ENCODE measurements at regions of chr14 and their contacts with region 1.

Region 1: GRCh38 chr14:104094709-104095438 is 9.4 kb downstream of the ASPG start:
- DNase-seq: peak; percentile 61 to 67
- H3K4me3 ChIP-seq: no peak overlapping the region
- H3K27ac ChIP-seq: no peak overlapping the region
- H3K4me1 ChIP-seq: peaks cover 4 to 7% of the 10 kb centered on the region in 2 donors
- H3K27me3 ChIP-seq: no peaks in the 10 kb centered on the region
- CTCF ChIP-seq: peak; percentile 59 to 91 (median 80)
- POLR2A ChIP-seq: no peak

Region 2: DNA sequence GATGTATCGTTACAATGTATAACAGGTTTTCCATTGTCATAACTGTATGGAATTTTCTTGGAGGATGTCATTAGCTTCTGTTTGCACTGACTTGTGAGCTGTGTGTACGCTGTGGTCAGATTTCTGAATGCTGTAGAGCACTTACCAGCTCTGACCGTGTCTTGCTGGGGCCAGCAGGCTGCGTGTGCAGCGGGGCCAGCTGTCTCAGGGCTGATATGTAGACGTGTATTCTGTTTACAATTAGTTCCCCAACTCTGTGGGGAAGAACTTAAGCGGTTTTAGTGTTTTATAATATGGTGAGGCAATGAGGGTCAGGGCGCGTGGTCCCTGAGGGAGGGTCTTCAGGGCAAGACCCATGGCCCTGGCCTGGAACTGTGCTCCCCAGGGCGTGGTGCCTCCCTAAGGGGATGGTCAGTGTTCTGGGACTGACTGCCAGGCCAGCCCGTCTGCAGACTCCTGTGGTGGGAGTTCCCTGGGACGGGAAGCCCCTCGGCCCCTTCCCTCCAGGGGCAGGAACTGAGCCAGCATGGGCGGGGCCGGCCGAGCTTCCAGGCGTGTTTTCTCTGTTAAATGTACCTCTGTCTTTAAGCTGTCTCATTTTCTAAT is 398.3 kb before region 1 on chr14:
- intact Hi-C with region 1: no loop called
- DNase-seq: no peak
- H3K4me3 ChIP-seq: no peak overlapping the region
- H3K27ac ChIP-seq: peak overlapping the region in 1 of 3 donors; percentile 46
- H3K4me1 ChIP-seq: peaks cover 3 to 19% of the 10 kb centered on the region in 2 donors
- H3K27me3 ChIP-seq: no peaks in the 10 kb centered on the region
- CTCF ChIP-seq: no peak
- POLR2A ChIP-seq: no peak

Region 3: GRCh38 chr14:103949131-103949790 is 145.6 kb before region 1 on chr14:
- intact Hi-C with region 1: no loop called
- DNase-seq: no peak
- H3K4me3 ChIP-seq: no peak overlapping the region
- H3K27ac ChIP-seq: no peak overlapping the region
- H3K4me1 ChIP-seq: no peaks in the 10 kb centered on the region
- H3K27me3 ChIP-seq: no peaks in the 10 kb centered on the region
- CTCF ChIP-seq: no peak
- POLR2A ChIP-seq: no peak

Region 4: DNA sequence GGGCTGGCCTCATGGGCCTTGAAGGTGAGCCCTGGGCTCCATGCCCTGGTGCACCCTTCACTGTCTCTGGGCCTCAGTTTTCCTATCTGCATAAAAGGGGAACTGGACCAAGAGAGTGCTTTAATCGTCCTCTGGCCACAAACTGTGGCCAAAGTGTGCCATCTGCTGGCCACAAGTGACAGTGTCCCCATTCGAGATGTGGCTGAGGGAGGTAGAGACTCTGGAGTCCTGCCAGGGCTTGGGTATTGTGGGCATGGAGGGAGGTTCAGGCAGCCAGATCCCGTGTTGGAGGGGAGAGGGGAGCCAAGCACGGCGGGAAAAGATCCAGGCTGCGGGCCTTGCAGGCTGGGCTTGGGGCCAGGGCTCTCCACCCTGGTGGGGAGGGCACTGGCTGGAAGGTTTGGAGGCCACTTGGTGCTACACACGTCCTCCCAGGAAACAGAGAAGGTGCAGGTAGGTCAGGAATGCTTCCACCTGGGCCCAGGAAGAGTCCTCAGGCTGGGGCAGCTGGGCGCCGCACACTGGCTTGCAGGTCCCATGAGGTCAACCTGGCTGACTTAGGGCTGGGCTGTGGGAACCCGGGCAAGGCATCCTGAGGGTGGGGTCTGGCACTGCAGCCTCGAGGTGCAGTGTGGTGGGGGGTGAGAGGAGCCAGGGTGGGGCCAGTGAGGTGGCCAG is 36.2 kb after region 1 on chr14:
- intact Hi-C with region 1: loop called (anchors 5 kb)
- DNase-seq: peak; percentile 81 to 89
- H3K4me3 ChIP-seq: no peak overlapping the region
- H3K27ac ChIP-seq: no peak overlapping the region
- H3K4me1 ChIP-seq: peaks cover 4 to 10% of the 10 kb centered on the region in 2 donors
- H3K27me3 ChIP-seq: peaks cover 8% of the 10 kb centered on the region
- CTCF ChIP-seq: peak; percentile 31 to 93 (median 76)
- POLR2A ChIP-seq: no peak

Measured in thyroid gland (tissue), 4 donors.